ENCODE measurements at regions of chr11 and their contacts with region 1.

Region 1: DNA sequence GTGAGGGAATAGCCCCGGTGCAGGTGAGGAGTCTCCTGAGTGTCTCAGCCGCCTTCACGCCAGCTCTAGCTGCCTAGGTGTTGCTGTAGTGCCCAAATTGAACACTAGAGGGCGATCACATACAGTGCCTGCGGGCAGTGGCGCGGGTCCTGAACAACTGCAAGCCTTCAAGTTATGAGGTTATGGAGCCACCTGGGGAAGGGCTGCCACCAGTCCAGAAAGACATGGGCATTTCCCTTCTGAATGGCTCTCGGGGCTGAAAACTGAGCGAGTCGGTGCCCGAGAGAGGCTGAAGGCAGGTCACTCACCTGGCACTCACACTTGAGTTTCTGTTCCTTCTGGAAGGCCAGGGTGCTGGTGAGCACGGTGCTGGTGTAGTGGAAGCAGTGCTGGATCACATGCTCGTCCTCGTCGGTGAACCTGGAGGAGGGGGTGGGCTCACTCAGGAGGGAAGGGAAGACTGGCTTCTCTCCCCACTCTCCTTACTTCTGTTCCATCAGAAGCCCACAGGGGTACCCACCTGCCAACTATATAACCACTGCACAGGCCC is 88.4 kb downstream of the PDE2A start:
- DNase-seq: peak; percentile 40 to 71
- ATAC-seq: peak; percentile 37 to 78 (median 71)
- H3K4me3 ChIP-seq: no peak overlapping the region
- H3K27ac ChIP-seq: no peak overlapping the region
- H3K4me1 ChIP-seq: peaks cover 3 to 36% (median 11%) of the 10 kb centered on the region in 9 donors
- H3K27me3 ChIP-seq: peaks cover 0 to 51% (median 25%) of the 10 kb centered on the region in 7 donors
- CTCF ChIP-seq: peak; percentile 88 to 97 (median 92)

Region 2: GRCh38 chr11:72525466-72525865 is 60.4 kb before region 1 on chr11:
- intact Hi-C with region 1: no loop called
- DNase-seq: no peak
- ATAC-seq: peak in 1 of 8 donors; percentile 38
- H3K4me3 ChIP-seq: no peak overlapping the region
- H3K27ac ChIP-seq: no peak overlapping the region
- H3K4me1 ChIP-seq: no peaks in the 10 kb centered on the region
- H3K27me3 ChIP-seq: no peaks in the 10 kb centered on the region
- CTCF ChIP-seq: no peak

Region 3: DNA sequence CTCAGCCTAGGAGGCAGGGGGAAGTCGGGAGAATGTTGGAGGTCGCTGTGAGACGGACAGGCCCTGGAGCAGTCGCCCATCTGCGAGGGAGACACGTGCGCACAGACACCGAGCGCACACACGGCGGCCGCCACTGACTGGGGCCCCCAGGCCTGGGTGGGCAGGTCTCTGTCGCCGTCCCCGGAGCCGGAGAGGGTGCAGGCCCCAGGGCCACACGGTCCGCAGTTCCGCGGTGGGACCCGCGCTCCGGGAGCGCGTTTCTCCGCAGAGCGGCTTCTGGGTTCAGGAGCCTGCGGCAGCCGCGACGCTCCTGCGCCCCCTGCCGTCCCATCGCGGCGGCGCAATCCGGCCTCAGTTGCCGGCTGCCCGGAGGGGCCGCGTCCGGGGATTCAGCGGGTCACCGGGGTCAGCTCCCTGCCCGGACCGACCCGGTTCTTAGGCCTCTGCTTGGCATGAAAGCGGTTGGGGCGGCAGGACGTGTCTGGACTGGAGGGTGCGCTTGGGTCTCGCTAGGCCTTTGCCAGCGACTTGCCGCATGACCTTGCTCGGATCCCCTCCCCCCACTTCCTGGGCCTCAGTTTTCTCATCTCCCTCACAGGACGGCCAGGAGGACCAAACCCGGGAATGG is 57.2 kb after region 1 on chr11:
- intact Hi-C with region 1: loop called in 6 of 10 experiments (anchors 1 to 5 kb)
- DNase-seq: peak; percentile 38 to 73
- ATAC-seq: peak; percentile 70 to 82 (median 79)
- H3K4me3 ChIP-seq: peak overlapping the region; percentile 58 to 75 (median 72)
- H3K27ac ChIP-seq: peak overlapping the region in 9 of 10 donors; percentile 2 to 84 (median 59)
- H3K4me1 ChIP-seq: peaks cover 6 to 48% (median 25%) of the 10 kb centered on the region in 9 donors
- H3K27me3 ChIP-seq: peaks cover 0 to 44% (median 0%) of the 10 kb centered on the region in 7 donors
- CTCF ChIP-seq: peak; percentile 95 to 100 (median 99)

Region 4: GRCh38 chr11:72683782-72684200 is 98.0 kb after region 1 on chr11:
- intact Hi-C with region 1: loop called in 8 of 10 experiments (anchors 1 to 5 kb)
- DNase-seq: peak; percentile 43 to 73
- ATAC-seq: peak; percentile 39 to 71 (median 60)
- H3K4me3 ChIP-seq: no peak overlapping the region
- H3K27ac ChIP-seq: peak overlapping the region in 4 of 10 donors; percentile 14 to 75 (median 60)
- H3K4me1 ChIP-seq: peaks cover 10 to 69% (median 40%) of the 10 kb centered on the region in 9 donors
- H3K27me3 ChIP-seq: peaks cover 0 to 8% (median under 1%) of the 10 kb centered on the region in 7 donors
- CTCF ChIP-seq: peak; percentile 81 to 96 (median 89)

Region 5: GRCh38 chr11:72793425-72794367 is 207.9 kb after region 1 on chr11 and contains the start of gene STARD10:
- intact Hi-C with region 1: loop called in 1 of 10 experiments (anchors 10 kb)
- DNase-seq: peak; percentile 96 to 97
- ATAC-seq: peak; percentile 95 to 98 (median 97)
- H3K4me3 ChIP-seq: peak within 1 kb of the TSS; percentile 51 to 78 (median 68)
- H3K27ac ChIP-seq: peak within 1 kb of the TSS; percentile 83 to 96 (median 90)
- H3K4me1 ChIP-seq: peaks cover 7 to 37% (median 34%) of the 10 kb centered on the region in 9 donors
- H3K27me3 ChIP-seq: no peaks in the 10 kb centered on the region
- CTCF ChIP-seq: peak; percentile 94 to 100 (median 98)
- total RNA-seq, gene STARD10: 36.1 to 97.9 (median 51.3) TPM

Region 6: DNA sequence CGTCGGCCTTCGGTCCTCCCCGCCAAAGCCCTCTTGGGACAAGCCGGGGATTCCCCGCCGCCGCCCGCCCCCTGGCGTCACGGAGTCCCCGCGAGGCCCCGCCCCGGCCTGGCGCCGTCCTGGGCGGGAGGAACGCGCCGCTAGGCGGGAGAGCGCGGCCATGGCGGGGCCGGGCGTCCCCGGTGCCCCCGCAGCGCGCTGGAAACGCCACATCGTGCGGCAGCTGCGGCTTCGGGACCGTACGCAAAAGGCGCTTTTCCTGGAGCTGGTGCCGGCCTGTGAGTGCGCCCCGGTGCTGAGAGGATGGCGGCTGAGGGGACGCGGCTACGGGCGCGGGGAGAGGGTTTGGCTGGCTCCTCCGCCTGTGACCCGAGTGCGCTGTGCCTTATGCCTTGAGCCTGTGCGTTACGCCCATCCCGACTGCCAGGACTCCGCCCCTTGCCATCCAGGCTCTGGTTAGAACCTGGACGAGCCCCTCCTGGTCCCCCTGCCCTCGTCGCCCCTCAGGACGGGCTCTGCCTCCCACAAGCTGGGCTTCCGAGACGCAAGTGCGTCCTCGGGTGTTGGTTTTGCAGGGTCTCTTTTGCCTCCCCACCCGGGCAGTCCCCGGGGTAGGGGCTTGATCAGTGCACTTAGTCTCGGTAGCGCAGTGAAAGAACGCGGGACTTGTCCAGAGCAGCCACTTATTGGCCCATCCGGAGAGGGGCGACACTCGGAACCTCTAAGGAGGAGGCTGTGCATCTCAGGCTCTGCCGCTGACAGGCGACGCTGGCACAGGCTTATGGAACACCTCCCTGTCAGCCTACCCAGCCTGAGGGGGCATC is 228.7 kb after region 1 on chr11 and contains the start of gene ATG16L2:
- intact Hi-C with region 1: loop called in 1 of 10 experiments (anchors 10 kb)
- DNase-seq: peak; percentile 86 to 90
- ATAC-seq: peak; percentile 93 to 96 (median 95)
- H3K4me3 ChIP-seq: peak within 1 kb of the TSS; percentile 58 to 98 (median 82)
- H3K27ac ChIP-seq: peak within 1 kb of the TSS; percentile 85 to 99 (median 96)
- H3K4me1 ChIP-seq: peaks cover 7 to 55% (median 36%) of the 10 kb centered on the region in 9 donors
- H3K27me3 ChIP-seq: no peaks in the 10 kb centered on the region
- CTCF ChIP-seq: peak; percentile 15 to 60 (median 33)
- total RNA-seq, gene ATG16L2: 8.0 to 23.9 (median 12.3) TPM